Prostate gland (tissue), 2 donors: ENCODE measurements at regions of chr12 and their contacts with region 1.

Region 1: DNA sequence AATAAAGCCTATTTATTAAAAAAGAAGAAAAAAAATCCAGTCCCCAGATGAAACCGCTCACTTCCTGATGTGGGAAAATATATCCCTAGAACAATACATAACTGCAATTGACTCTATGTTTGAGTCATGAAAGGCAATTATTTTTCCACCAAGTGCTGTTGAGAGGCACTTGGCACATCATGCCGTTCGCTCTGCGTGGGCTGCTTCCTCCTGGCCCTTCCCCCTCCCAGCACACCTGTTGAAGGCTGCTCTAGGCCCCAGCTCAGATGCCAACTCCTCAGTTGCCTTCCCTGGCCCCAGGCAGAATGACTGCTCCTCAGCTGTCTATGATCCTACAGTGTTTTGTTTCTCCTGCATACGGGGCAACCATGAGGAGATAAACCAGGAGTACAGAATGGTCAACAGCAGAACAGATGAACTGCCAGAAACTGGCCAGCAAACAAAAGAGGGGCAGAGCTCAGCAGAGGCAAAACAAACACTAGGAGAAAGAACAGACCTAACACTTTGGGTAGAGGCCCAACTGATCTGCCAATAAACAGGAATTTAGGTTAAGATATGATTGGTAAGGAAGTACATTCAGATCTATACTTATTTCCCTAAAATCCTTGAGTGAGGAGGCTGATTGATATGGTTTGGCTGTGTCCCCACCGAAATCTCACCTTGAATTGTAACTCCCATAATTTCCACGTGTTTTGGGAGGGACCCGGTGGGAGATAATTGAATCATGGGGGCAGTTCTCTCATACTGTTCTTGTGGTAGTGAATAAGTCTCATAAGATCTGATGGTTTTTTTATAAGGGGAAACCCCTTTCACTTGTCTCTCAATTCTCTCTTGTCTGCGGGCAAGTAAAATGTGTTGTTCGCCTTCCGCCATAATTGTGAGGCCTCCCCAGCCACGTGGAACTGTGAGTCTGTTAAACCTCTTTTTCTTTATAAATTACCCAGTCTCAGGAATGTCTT is 58.6 kb downstream of the SLC38A1 start:
- DNase-seq: peak; percentile 27
- H3K4me3 ChIP-seq: no peak overlapping the region
- H3K27ac ChIP-seq: peak overlapping the region; percentile 8 to 60
- H3K4me1 ChIP-seq: no peaks in the 10 kb centered on the region
- H3K27me3 ChIP-seq: no peaks in the 10 kb centered on the region
- CTCF ChIP-seq: no peak
- POLR2A ChIP-seq: no peak

Region 2: DNA sequence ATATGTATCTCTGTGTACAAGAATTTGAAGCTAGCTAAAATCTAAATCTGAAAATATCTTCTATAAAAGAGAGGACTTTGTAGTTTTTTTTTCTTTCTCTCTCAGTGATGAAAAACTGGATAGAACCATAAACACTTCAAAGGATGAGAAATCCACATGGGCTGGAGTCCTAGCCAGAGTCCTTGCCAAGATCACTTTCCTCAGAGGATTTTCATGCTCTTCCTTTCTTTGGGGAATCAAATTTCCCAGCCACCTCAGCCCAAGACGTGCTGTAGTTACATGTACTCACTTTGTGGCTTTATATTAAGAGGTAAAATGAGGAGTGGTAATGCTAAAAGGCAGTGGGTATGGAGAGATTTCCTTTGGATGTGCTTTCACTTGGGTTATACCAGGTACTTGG is 51.7 kb before region 1 on chr12:
- intact Hi-C with region 1: loop called (anchors 5 kb)
- DNase-seq: no peak
- H3K4me3 ChIP-seq: no peak overlapping the region
- H3K27ac ChIP-seq: no peak overlapping the region
- H3K4me1 ChIP-seq: no peaks in the 10 kb centered on the region
- H3K27me3 ChIP-seq: no peaks in the 10 kb centered on the region
- CTCF ChIP-seq: no peak
- POLR2A ChIP-seq: no peak